Activated CD8-positive, alpha-beta T cell treated with anti-CD3 and anti-CD28 coated beads, Interleukin-2, amount 10 ng/mL, durations not matched to agents 7 days and 5 days (primary cell): ENCODE measurements at regions of chr17 and their contacts with region 1.

Region 1: GRCh38 chr17:37816950-37817349 is 72.1 kb upstream of the HNF1B start:
- DNase-seq: no peak
- ATAC-seq: no peak
- H3K4me3 Mint-ChIP-seq: no peak overlapping the region
- H3K27ac Mint-ChIP-seq: no peak overlapping the region
- H3K4me1 Mint-ChIP-seq: peaks cover 24% of the 10 kb centered on the region
- H3K27me3 Mint-ChIP-seq: peaks cover 21% of the 10 kb centered on the region

Region 2: GRCh38 chr17:37650419-37651003 is 166.4 kb before region 1 on chr17:
- CTCF ChIA-PET with region 1: interaction called, 22 read pairs
- POLR2A ChIA-PET with region 1: no interaction called
- DNase-seq: no peak
- ATAC-seq: no peak
- H3K4me3 Mint-ChIP-seq: no peak overlapping the region
- H3K27ac Mint-ChIP-seq: no peak overlapping the region
- H3K4me1 Mint-ChIP-seq: no peaks in the 10 kb centered on the region
- H3K27me3 Mint-ChIP-seq: peaks cover 55% of the 10 kb centered on the region

Region 3: DNA sequence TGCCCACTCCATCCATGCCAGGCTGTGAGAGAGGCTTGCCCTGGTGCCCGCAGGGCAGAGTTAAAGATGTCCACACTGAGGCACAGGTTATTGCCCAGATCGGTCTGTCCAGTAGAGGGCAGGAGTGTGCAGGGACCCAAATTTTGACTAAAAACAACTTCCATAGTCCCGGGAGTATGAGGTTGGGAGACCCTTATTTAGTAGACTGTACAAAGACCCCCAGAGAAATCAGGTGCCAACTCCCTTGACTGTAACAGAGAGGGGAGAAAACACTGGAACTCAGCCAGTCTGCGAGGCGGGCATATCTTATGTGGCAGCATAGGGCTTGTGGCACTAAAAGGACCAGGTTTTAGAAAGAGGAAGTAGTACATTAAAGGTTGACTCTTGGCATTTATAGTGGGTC is 115.5 kb before region 1 on chr17:
- CTCF ChIA-PET with region 1: interaction called, 29 read pairs
- POLR2A ChIA-PET with region 1: no interaction called
- DNase-seq: peak; percentile 65
- ATAC-seq: peak; percentile 71
- H3K4me3 Mint-ChIP-seq: no peak overlapping the region
- H3K27ac Mint-ChIP-seq: no peak overlapping the region
- H3K4me1 Mint-ChIP-seq: peaks cover 8% of the 10 kb centered on the region
- H3K27me3 Mint-ChIP-seq: peaks cover 28% of the 10 kb centered on the region

Region 4: DNA sequence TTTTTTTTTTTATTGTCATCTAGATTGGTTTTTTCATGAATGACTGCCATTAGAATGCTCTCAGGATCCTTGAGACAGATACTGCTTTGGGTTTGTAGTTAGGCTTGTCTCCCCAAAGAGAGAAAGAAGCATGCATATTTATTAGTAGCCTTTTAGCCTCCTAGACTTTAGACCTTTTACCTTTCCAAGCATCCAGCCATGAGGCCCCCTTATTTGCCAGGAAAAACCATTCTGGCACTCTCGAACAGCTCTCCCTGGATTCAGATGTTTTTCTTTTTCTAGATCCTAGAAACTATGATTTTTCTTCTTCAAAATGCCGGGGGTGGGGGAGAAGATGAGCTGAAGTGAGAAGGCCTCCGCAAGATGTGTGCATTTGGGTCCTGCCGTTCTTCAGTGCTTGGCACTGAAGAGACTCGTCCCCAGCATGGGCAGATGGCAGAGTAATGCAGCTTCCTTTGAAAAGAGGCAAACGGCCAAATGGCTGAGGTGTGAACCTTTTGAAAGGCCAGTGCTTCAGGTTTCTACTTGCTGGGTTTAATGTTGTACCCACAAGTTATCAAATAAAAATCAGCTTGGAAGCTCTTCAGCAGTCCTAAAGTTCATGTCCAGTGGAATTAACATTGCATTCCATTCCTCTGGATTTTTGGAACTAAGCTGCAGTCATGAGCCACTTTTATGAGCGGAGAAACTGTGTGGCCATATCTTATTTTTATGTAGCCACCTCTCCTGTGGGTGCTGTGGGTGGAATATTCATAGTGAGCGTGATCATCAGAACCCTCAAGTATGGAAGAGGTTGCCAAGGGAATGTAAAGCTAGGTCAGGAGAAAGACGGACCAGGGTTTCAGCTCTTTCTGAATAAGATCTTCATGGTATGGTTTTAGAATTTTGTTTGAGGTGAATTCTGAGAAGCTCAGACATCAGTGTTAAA is 541.9 kb after region 1 on chr17:
- CTCF ChIA-PET with region 1: no interaction called
- POLR2A ChIA-PET with region 1: no interaction called
- DNase-seq: no peak
- ATAC-seq: no peak
- H3K4me3 Mint-ChIP-seq: no peak overlapping the region
- H3K27ac Mint-ChIP-seq: no peak overlapping the region
- H3K4me1 Mint-ChIP-seq: peaks cover 22% of the 10 kb centered on the region
- H3K27me3 Mint-ChIP-seq: no peaks in the 10 kb centered on the region